Gastrocnemius medialis (tissue), 4 donors: ENCODE measurements at regions of chr17 and their contacts with region 1.

Region 1: GRCh38 chr17:2621241-2621640 is 27.8 kb downstream of the PAFAH1B1 start:
- DNase-seq: no peak
- ATAC-seq: no peak
- H3K4me3 ChIP-seq: no peak overlapping the region
- H3K27ac ChIP-seq: no peak overlapping the region
- H3K4me1 ChIP-seq: peaks cover 49 to 52% of the 10 kb centered on the region in 2 donors
- H3K27me3 ChIP-seq: no peaks in the 10 kb centered on the region
- CTCF ChIP-seq: no peak
- POLR2A ChIP-seq: no peak

Region 2: DNA sequence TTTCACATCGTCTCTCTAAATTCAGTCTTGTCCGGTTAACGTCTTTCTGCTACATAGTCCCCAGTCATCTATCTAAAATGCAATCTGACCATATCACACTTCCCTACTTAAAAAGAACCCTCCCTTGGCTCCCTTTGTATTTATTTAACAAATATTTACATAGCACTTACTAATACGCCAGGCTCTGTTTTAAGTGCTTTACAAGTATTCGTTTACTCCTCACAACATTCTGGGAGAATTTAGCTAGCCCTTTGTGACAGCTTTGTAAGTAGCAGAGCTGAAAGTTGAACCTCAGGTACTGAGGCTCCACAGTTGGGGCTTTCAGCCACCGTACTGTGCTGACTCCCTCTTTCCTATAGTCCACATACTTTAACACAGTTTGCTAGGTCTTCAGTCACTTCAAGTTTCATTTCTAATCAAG is 18.6 kb before region 1 on chr17:
- in situ Hi-C with region 1: no loop called
- intact Hi-C with region 1: loop called (anchors 2 kb)
- DNase-seq: no peak
- ATAC-seq: no peak
- H3K4me3 ChIP-seq: no peak overlapping the region
- H3K27ac ChIP-seq: peak overlapping the region in 2 of 4 donors; percentile 17 to 58
- H3K4me1 ChIP-seq: peaks cover 61 to 74% of the 10 kb centered on the region in 2 donors
- H3K27me3 ChIP-seq: no peaks in the 10 kb centered on the region
- CTCF ChIP-seq: no peak
- POLR2A ChIP-seq: no peak

Region 3: GRCh38 chr17:2711601-2712299 is 90.5 kb after region 1 on chr17 and contains the start of gene CLUH:
- in situ Hi-C with region 1: no loop called
- intact Hi-C with region 1: no loop called
- DNase-seq: peak; percentile 94 to 98
- ATAC-seq: peak; percentile 52 to 61
- H3K4me3 ChIP-seq: peak within 1 kb of the TSS; percentile 65 to 84 (median 77)
- H3K27ac ChIP-seq: peak within 1 kb of the TSS; percentile 91 to 98 (median 96)
- H3K4me1 ChIP-seq: peaks cover 45 to 52% of the 10 kb centered on the region in 2 donors
- H3K27me3 ChIP-seq: no peaks in the 10 kb centered on the region
- CTCF ChIP-seq: peak in 1 of 5 experiments; percentile 49
- POLR2A ChIP-seq: peak; percentile 98 to 99
- total RNA-seq, gene CLUH: 104 to 286 (median 211) TPM